A673 (cell line): ENCODE measurements at regions of chr9 and their contacts with region 1.

Region 1: GRCh38 chr9:79477955-79478771 is 93.6 kb upstream of the TLE4 start:
- DNase-seq: peak; percentile 71
- H3K4me3 ChIP-seq: no peak overlapping the region
- H3K27ac ChIP-seq: no peak overlapping the region
- H3K4me1 ChIP-seq: no peaks in the 10 kb centered on the region
- H3K27me3 ChIP-seq: no peaks in the 10 kb centered on the region
- CTCF ChIP-seq: peak; percentile 76

Region 2: GRCh38 chr9:79012561-79012960 is 465.6 kb before region 1 on chr9:
- CTCF ChIA-PET with region 1: no interaction called
- POLR2A ChIA-PET with region 1: no interaction called
- intact Hi-C with region 1: no loop called
- DNase-seq: peak; percentile 28
- H3K4me3 ChIP-seq: no peak overlapping the region
- H3K27ac ChIP-seq: no peak overlapping the region
- H3K4me1 ChIP-seq: peaks cover 1% of the 10 kb centered on the region
- H3K27me3 ChIP-seq: no peaks in the 10 kb centered on the region
- CTCF ChIP-seq: no peak

Region 3: DNA sequence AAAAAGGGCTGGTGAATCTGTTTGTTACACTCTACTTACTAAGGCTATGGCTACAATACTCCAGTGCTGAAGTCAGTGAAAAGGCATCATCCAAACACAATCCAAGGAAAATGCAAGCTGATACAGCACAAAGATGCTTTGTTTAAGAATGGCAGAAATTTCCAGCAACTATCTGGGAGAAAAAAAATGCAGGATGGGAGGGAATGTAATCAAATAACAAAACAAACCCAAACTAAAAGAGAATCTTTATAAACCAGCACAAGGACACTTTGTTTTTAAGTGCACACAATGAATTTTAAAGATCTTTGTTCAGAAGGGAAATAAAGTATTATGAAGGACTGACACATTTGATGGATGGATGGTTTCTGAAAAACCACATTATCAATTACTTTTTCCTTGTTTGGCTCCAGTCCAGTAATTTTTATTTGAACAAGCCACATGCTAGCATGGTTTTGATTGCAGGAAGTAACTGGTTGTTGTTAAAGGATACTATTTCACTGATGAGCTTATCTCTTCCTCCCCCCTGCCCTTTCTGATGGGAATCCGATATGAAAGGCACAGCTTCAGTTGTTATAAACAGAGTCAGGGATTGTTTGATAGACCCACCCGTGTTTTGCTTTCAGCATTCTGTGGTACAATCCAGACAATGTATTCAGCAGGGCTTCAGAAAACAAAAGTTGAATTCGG is 81.5 kb after region 1 on chr9:
- CTCF ChIA-PET with region 1: no interaction called
- POLR2A ChIA-PET with region 1: no interaction called
- intact Hi-C with region 1: loop called (anchors 5 kb)
- DNase-seq: peak; percentile 20
- H3K4me3 ChIP-seq: no peak overlapping the region
- H3K27ac ChIP-seq: no peak overlapping the region
- H3K4me1 ChIP-seq: peaks cover 9% of the 10 kb centered on the region
- H3K27me3 ChIP-seq: no peaks in the 10 kb centered on the region
- CTCF ChIP-seq: no peak

Region 4: GRCh38 chr9:79662537-79662956 is 184.4 kb after region 1 on chr9:
- CTCF ChIA-PET with region 1: no interaction called
- POLR2A ChIA-PET with region 1: no interaction called
- intact Hi-C with region 1: loop called (anchors 10 kb)
- DNase-seq: peak; percentile 86
- H3K4me3 ChIP-seq: no peak overlapping the region
- H3K27ac ChIP-seq: peak overlapping the region; percentile 0
- H3K4me1 ChIP-seq: peaks cover 46% of the 10 kb centered on the region
- H3K27me3 ChIP-seq: no peaks in the 10 kb centered on the region
- CTCF ChIP-seq: no peak

Region 5: GRCh38 chr9:79946712-79947111 is 468.5 kb after region 1 on chr9:
- CTCF ChIA-PET with region 1: no interaction called
- POLR2A ChIA-PET with region 1: no interaction called
- intact Hi-C with region 1: loop called (anchors 10 kb)
- DNase-seq: no peak
- H3K4me3 ChIP-seq: no peak overlapping the region
- H3K27ac ChIP-seq: no peak overlapping the region
- H3K4me1 ChIP-seq: no peaks in the 10 kb centered on the region
- H3K27me3 ChIP-seq: no peaks in the 10 kb centered on the region
- CTCF ChIP-seq: no peak

Region 6: GRCh38 chr9:80163889-80164288 is 685.7 kb after region 1 on chr9:
- CTCF ChIA-PET with region 1: no interaction called
- POLR2A ChIA-PET with region 1: no interaction called
- intact Hi-C with region 1: loop called (anchors 10 kb)
- DNase-seq: no peak
- H3K4me3 ChIP-seq: no peak overlapping the region
- H3K27ac ChIP-seq: no peak overlapping the region
- H3K4me1 ChIP-seq: no peaks in the 10 kb centered on the region
- H3K27me3 ChIP-seq: peaks cover 10% of the 10 kb centered on the region
- CTCF ChIP-seq: no peak